ENCODE measurements at regions of chr6 and their contacts with region 1.

Region 1: GRCh38 chr6:17851001-17851719 is 136.3 kb downstream of the KIF13A start:
- DNase-seq: peak; percentile 90
- ATAC-seq: peak; percentile 89
- H3K4me3 ChIP-seq: peak overlapping the region; percentile 32
- H3K27ac ChIP-seq: peak overlapping the region; percentile 94
- H3K4me1 ChIP-seq: peaks cover 32% of the 10 kb centered on the region
- H3K27me3 ChIP-seq: no peaks in the 10 kb centered on the region
- CTCF ChIP-seq: no peak

Region 2: DNA sequence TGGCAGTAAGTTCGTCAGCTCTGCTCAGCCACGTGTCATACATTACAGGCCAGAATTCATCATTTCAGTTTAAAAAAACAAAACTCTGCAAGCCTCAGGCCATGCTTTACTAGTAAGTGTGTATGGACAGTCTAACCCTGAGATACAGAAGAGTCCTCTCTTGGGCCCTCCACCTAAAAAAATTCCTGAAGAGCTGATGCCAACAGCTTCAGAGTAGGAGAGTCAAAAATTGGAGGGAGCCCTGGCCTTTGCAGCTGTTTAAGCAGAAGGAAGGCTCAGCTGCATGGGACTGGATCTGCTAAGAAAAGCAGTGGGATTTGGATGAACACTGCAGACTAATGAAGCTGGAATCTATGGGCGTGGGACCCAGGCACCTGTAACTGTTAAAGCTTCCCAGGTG is 298.3 kb before region 1 on chr6:
- CTCF ChIA-PET with region 1: no interaction called
- POLR2A ChIA-PET with region 1: no interaction called
- intact Hi-C with region 1: no loop called
- DNase-seq: no peak
- ATAC-seq: no peak
- H3K4me3 ChIP-seq: no peak overlapping the region
- H3K27ac ChIP-seq: no peak overlapping the region
- H3K4me1 ChIP-seq: no peaks in the 10 kb centered on the region
- H3K27me3 ChIP-seq: no peaks in the 10 kb centered on the region
- CTCF ChIP-seq: no peak

Region 3: DNA sequence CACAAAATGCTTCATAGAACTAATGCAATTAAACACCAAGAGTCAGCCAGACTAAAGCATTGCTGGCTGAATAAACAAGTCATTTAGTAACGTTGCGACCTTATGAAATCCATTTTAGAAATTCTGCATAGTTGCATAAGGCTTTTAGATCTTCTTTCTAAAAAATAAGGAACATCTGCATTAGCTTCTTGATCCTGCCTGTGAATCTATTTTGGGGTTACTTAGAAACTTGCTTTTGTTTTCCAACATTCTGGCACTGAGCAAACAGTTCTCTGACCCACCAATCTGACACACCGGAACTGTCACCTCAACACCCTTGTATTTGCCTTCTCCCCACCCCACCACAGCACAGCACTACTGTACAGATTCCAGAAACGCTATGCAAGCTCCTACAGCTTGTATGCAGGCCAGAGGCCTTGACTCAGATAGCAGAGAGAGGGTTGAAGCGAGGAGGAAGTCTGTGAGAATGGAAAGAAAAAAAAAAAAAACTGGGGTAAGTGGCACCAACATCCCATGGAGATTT is 81.2 kb after region 1 on chr6:
- CTCF ChIA-PET with region 1: no interaction called
- POLR2A ChIA-PET with region 1: no interaction called
- intact Hi-C with region 1: loop called (anchors 1 kb)
- DNase-seq: no peak
- ATAC-seq: no peak
- H3K4me3 ChIP-seq: no peak overlapping the region
- H3K27ac ChIP-seq: no peak overlapping the region
- H3K4me1 ChIP-seq: peaks cover 6% of the 10 kb centered on the region; the same call in 1 of the 2 replicates
- H3K27me3 ChIP-seq: no peaks in the 10 kb centered on the region
- CTCF ChIP-seq: no peak

Region 4: GRCh38 chr6:17987576-17988421 is 136.6 kb after region 1 on chr6 and contains the start of gene KIF13A:
- CTCF ChIA-PET with region 1: no interaction called
- POLR2A ChIA-PET with region 1: no interaction called
- intact Hi-C with region 1: loop called (anchors 5 kb)
- DNase-seq: peak; percentile 71
- ATAC-seq: peak; percentile 66
- H3K4me3 ChIP-seq: peak within 1 kb of the TSS; percentile 86
- H3K27ac ChIP-seq: peak within 1 kb of the TSS; percentile 54
- H3K4me1 ChIP-seq: peaks cover 43% of the 10 kb centered on the region
- H3K27me3 ChIP-seq: no peaks in the 10 kb centered on the region
- CTCF ChIP-seq: peak; percentile 21
- total RNA-seq, gene KIF13A: 21.3 and 27.1 TPM in 2 replicates

Measured in PC-3 (cell line).